ENCODE measurements at regions of chr2 and their contacts with region 1.

Region 1: GRCh38 chr2:24971536-24972314 is at the start of gene DNAJC27:
- DNase-seq: peak; percentile 93 to 99
- H3K4me3 ChIP-seq: peak within 1 kb of the TSS; percentile 88 to 96 (median 92)
- H3K27ac ChIP-seq: peak within 1 kb of the TSS; percentile 94
- H3K4me1 ChIP-seq: no peaks in the 10 kb centered on the region
- H3K27me3 ChIP-seq: no peaks in the 10 kb centered on the region
- CTCF ChIP-seq: no peak; a peak in 1 of 4 replicates
- EP300 ChIP-seq: no peak
- POLR2A ChIP-seq: peak; percentile 69 to 73
- RAD21 ChIP-seq: no peak
- total RNA-seq, gene DNAJC27: 3.7 and 4.5 TPM in 2 replicates

Region 2: GRCh38 chr2:24754985-24755705 is 216.6 kb before region 1 on chr2:
- CTCF ChIA-PET with region 1: no interaction called
- POLR2A ChIA-PET with region 1: no interaction called
- DNase-seq: no peak
- H3K4me3 ChIP-seq: no peak overlapping the region
- H3K27ac ChIP-seq: no peak overlapping the region
- H3K4me1 ChIP-seq: peaks cover 2 to 5% (median 3%) of the 10 kb centered on the region in 4 experiments; a peak in 5 of 7 replicates
- H3K27me3 ChIP-seq: peaks cover 0 to 2% (median 0%) of the 10 kb centered on the region in 4 experiments; a peak in 1 of 7 replicates
- CTCF ChIP-seq: no peak
- EP300 ChIP-seq: no peak
- POLR2A ChIP-seq: no peak
- RAD21 ChIP-seq: no peak

Region 3: GRCh38 chr2:24984912-24985311 is 13.2 kb after region 1 on chr2:
- CTCF ChIA-PET with region 1: interaction called, 22 read pairs
- POLR2A ChIA-PET with region 1: interaction called, 3 read pairs
- DNase-seq: no peak
- H3K4me3 ChIP-seq: no peak overlapping the region
- H3K27ac ChIP-seq: no peak overlapping the region
- H3K4me1 ChIP-seq: peaks cover 0 to 7% (median 0%) of the 10 kb centered on the region in 4 experiments; a peak in 2 of 7 replicates
- H3K27me3 ChIP-seq: no peaks in the 10 kb centered on the region
- CTCF ChIP-seq: no peak
- EP300 ChIP-seq: no peak
- POLR2A ChIP-seq: no peak
- RAD21 ChIP-seq: no peak

Region 4: DNA sequence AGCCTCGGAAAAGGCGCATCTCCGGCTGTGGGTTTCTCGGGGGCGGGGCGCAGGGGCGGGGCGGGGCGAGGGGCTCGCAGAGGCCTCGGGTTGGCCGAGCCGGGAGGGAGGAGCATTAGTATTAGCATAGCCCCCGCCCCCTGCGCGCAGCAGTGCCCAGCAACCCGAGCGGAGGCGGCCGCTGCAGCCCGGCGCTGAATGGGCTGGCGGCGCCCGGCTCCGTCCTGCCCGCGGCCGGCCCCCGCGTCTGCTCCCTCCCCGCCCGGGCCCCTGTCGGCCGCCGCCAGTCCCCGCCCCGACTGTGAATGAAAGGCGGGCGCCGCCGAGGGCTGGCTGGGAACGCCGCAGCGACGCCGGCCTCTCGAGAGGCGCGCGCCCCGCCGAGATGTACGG is 70.2 kb after region 1 on chr2 and contains the start of gene EFR3B:
- CTCF ChIA-PET with region 1: interaction called, 13 read pairs
- POLR2A ChIA-PET with region 1: interaction called, 3 read pairs
- DNase-seq: peak; percentile 53 to 82
- H3K4me3 ChIP-seq: peak within 1 kb of the TSS; percentile 66 to 98 (median 77)
- H3K27ac ChIP-seq: no peak within 1 kb of the TSS
- H3K4me1 ChIP-seq: peaks cover 0 to 10% (median 5%) of the 10 kb centered on the region in 4 experiments; a peak in 5 of 7 replicates
- H3K27me3 ChIP-seq: peaks cover 0 to 16% (median 12%) of the 10 kb centered on the region in 4 experiments; a peak in 6 of 7 replicates
- CTCF ChIP-seq: no peak
- EP300 ChIP-seq: no peak
- POLR2A ChIP-seq: no peak; a peak in 1 of 3 replicates
- RAD21 ChIP-seq: no peak
- total RNA-seq, gene EFR3B: 8.8 and 9.6 TPM in 2 replicates

Region 5: GRCh38 chr2:25123682-25124081 is 152.0 kb after region 1 on chr2:
- CTCF ChIA-PET with region 1: interaction called, 176 read pairs
- POLR2A ChIA-PET with region 1: interaction called, 7 read pairs
- DNase-seq: no peak
- H3K4me3 ChIP-seq: no peak overlapping the region
- H3K27ac ChIP-seq: no peak overlapping the region
- H3K4me1 ChIP-seq: no peaks in the 10 kb centered on the region
- H3K27me3 ChIP-seq: no peaks in the 10 kb centered on the region
- CTCF ChIP-seq: no peak
- EP300 ChIP-seq: no peak
- POLR2A ChIP-seq: no peak
- RAD21 ChIP-seq: no peak

Region 6: GRCh38 chr2:25165992-25166875 is 194.5 kb after region 1 on chr2:
- CTCF ChIA-PET with region 1: interaction called, 13 read pairs
- POLR2A ChIA-PET with region 1: no interaction called
- DNase-seq: peak in 1 of 2 experiments; percentile 65
- H3K4me3 ChIP-seq: no peak overlapping the region
- H3K27ac ChIP-seq: no peak overlapping the region
- H3K4me1 ChIP-seq: peaks cover 0 to 5% (median 4%) of the 10 kb centered on the region in 4 experiments; a peak in 5 of 7 replicates
- H3K27me3 ChIP-seq: peaks cover 14 to 45% (median 41%) of the 10 kb centered on the region in 4 experiments
- CTCF ChIP-seq: peak; percentile 66 to 82 (median 79)
- EP300 ChIP-seq: no peak; a peak in 1 of 3 replicates
- POLR2A ChIP-seq: no peak
- RAD21 ChIP-seq: peak; percentile 82 to 87

Measured in H1 (cell line).